ENCODE measurements at regions of chr19 and their contacts with region 1.

Region 1: DNA sequence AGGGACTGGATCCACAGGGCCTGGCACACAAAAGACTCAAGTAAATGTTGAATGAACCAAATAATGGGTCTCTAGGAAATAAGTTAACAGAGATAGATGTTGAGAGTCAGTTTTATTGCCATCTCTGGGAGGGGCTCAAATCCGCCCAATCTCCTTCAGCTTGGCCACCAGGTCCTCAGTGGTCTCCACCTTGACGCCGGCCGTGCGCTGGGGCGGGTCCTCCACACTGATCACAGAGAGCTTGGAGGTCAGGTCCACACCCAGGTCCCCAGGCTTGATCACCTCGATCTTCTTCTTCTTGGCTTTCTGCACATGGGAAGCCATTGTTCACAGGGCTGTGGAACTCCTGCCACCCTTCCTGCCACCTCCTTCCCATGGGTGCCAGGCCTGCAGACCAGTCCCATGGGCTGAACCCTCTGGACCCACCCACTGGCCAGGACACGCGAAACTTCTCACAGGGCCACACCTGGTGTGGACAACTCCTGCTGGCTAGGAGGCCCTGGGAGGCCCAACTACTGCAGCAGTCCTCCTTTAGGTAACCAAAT is 3.2 kb upstream of the VSIG10L start:
- DNase-seq: no peak
- H3K4me3 ChIP-seq: no peak overlapping the region
- H3K27ac ChIP-seq: no peak overlapping the region
- H3K4me1 ChIP-seq: no peaks in the 10 kb centered on the region
- H3K27me3 ChIP-seq: no peaks in the 10 kb centered on the region
- CTCF ChIP-seq: no peak
- POLR2A ChIP-seq: no peak

Region 2: GRCh38 chr19:51296336-51297093 is 48.6 kb before region 1 on chr19:
- intact Hi-C with region 1: no loop called
- DNase-seq: no peak
- H3K4me3 ChIP-seq: no peak overlapping the region
- H3K27ac ChIP-seq: no peak overlapping the region
- H3K4me1 ChIP-seq: no peaks in the 10 kb centered on the region
- H3K27me3 ChIP-seq: peaks cover 0 to 41% of the 10 kb centered on the region in 2 donors
- CTCF ChIP-seq: no peak
- POLR2A ChIP-seq: no peak

Region 3: DNA sequence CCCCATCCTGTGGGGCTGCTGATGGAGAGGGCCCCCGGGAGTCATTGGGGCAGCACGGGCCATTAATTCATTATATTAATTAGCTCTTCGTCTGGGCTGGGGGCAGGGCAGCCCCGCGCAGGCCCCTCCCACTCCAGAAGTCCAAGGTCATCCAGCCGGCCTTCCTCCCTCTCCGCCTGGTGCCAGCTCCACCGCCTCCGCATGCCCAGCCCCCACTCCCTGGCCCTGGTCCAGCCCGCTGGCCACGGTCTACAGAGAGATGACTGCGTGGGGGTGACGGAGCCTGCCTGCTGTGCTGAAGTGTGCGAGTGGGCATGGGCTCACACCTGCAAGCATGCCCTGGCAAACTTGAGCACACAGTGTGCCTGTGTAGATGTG is 24.9 kb before region 1 on chr19:
- intact Hi-C with region 1: no loop called
- DNase-seq: no peak
- H3K4me3 ChIP-seq: no peak overlapping the region
- H3K27ac ChIP-seq: no peak overlapping the region
- H3K4me1 ChIP-seq: no peaks in the 10 kb centered on the region
- H3K27me3 ChIP-seq: peaks cover 0 to 51% of the 10 kb centered on the region in 2 donors
- CTCF ChIP-seq: no peak
- POLR2A ChIP-seq: no peak

Region 4: GRCh38 chr19:51391073-51391611 is 46.0 kb after region 1 on chr19:
- intact Hi-C with region 1: loop called (anchors 2 kb)
- DNase-seq: no peak
- H3K4me3 ChIP-seq: no peak overlapping the region
- H3K27ac ChIP-seq: no peak overlapping the region
- H3K4me1 ChIP-seq: no peaks in the 10 kb centered on the region
- H3K27me3 ChIP-seq: no peaks in the 10 kb centered on the region
- CTCF ChIP-seq: no peak
- POLR2A ChIP-seq: no peak

Measured in breast epithelium (tissue), 4 donors.